IMR-90 (cell line): ENCODE measurements at regions of chr2 and their contacts with region 1.

Region 1: GRCh38 chr2:231900486-231900942 is 25.7 kb downstream of the NPPC start:
- DNase-seq: peak; percentile 55
- ATAC-seq: peak; percentile 100
- H3K4me3 ChIP-seq: no peak overlapping the region
- H3K27ac ChIP-seq: no peak overlapping the region
- H3K4me1 ChIP-seq: no peaks in the 10 kb centered on the region
- H3K27me3 ChIP-seq: peaks cover 16% of the 10 kb centered on the region; the same call in 1 of the 2 replicates
- CTCF ChIP-seq: peak; percentile 79
- POLR2A ChIP-seq: no peak
- RAD21 ChIP-seq: peak; percentile 57

Region 2: GRCh38 chr2:232075080-232075479 is 174.6 kb after region 1 on chr2:
- CTCF ChIA-PET with region 1: no interaction called
- POLR2A ChIA-PET with region 1: no interaction called
- dilution Hi-C with region 1: no loop called
- in situ Hi-C with region 1: no loop called
- intact Hi-C with region 1: no loop called
- DNase-seq: peak; percentile 73
- ATAC-seq: peak; percentile 75
- H3K4me3 ChIP-seq: no peak overlapping the region
- H3K27ac ChIP-seq: no peak overlapping the region
- H3K4me1 ChIP-seq: peaks cover 5% of the 10 kb centered on the region
- H3K27me3 ChIP-seq: no peaks in the 10 kb centered on the region
- CTCF ChIP-seq: no peak
- POLR2A ChIP-seq: no peak
- RAD21 ChIP-seq: no peak

Region 3: DNA sequence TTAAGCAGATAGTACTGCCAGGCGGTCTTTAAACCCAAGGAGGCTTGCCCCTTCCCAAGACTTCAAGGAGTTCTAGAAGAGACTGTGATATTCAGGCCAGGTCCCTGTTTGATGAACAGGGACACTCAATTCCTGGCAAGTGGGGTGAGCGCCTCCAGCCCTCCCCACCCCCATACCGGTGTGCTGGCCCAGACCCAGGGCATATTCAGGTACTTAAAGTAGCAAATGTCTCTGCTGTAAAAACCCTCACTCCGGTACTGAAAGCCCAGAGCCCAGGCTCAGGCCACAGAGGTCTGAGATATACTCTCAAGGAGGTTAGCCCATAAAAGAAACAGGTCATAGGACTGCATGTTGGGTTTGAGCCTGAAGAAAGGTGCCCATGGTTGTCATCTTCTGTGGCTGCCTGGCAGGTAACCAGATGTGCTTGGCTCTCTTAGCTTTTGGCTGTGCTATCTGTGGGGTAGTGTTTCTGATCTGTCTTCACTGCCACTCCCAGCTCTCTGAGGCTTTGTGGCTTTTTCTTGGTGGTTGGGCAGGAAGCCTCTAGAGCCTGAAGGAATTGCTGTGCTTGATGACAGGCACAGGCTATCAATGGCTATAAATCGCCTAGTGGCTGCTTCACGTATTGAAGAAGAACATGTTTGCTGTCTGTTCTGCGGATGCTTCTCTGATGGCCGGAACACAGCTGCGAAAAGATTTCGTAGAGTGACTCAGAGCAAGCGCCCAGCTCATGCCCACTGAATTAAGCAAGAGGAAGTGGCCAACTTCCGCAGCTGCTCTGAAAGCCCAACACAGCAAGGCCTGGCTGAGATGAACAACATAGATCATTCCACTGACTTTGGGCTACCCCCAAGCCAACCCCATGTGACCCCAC is 414.8 kb after region 1 on chr2:
- CTCF ChIA-PET with region 1: no interaction called
- POLR2A ChIA-PET with region 1: no interaction called
- dilution Hi-C with region 1: no loop called
- in situ Hi-C with region 1: loop called (anchors 5 kb)
- intact Hi-C with region 1: no loop called
- DNase-seq: peak; percentile 30
- ATAC-seq: no peak
- H3K4me3 ChIP-seq: no peak overlapping the region
- H3K27ac ChIP-seq: no peak overlapping the region
- H3K4me1 ChIP-seq: no peaks in the 10 kb centered on the region
- H3K27me3 ChIP-seq: no peaks in the 10 kb centered on the region
- CTCF ChIP-seq: no peak
- POLR2A ChIP-seq: no peak
- RAD21 ChIP-seq: no peak

Region 4: GRCh38 chr2:232432598-232433184 is 532.2 kb after region 1 on chr2:
- CTCF ChIA-PET with region 1: interaction called, 3 read pairs
- POLR2A ChIA-PET with region 1: no interaction called
- dilution Hi-C with region 1: no loop called
- in situ Hi-C with region 1: loop called (anchors 5 kb)
- intact Hi-C with region 1: no loop called
- DNase-seq: no peak
- ATAC-seq: no peak
- H3K4me3 ChIP-seq: no peak overlapping the region
- H3K27ac ChIP-seq: no peak overlapping the region
- H3K4me1 ChIP-seq: no peaks in the 10 kb centered on the region
- H3K27me3 ChIP-seq: peaks cover 23% of the 10 kb centered on the region
- CTCF ChIP-seq: 0 out of 2 replicates have a peak, but pooled peaks have one; percentile 14
- POLR2A ChIP-seq: no peak
- RAD21 ChIP-seq: no peak

Region 5: DNA sequence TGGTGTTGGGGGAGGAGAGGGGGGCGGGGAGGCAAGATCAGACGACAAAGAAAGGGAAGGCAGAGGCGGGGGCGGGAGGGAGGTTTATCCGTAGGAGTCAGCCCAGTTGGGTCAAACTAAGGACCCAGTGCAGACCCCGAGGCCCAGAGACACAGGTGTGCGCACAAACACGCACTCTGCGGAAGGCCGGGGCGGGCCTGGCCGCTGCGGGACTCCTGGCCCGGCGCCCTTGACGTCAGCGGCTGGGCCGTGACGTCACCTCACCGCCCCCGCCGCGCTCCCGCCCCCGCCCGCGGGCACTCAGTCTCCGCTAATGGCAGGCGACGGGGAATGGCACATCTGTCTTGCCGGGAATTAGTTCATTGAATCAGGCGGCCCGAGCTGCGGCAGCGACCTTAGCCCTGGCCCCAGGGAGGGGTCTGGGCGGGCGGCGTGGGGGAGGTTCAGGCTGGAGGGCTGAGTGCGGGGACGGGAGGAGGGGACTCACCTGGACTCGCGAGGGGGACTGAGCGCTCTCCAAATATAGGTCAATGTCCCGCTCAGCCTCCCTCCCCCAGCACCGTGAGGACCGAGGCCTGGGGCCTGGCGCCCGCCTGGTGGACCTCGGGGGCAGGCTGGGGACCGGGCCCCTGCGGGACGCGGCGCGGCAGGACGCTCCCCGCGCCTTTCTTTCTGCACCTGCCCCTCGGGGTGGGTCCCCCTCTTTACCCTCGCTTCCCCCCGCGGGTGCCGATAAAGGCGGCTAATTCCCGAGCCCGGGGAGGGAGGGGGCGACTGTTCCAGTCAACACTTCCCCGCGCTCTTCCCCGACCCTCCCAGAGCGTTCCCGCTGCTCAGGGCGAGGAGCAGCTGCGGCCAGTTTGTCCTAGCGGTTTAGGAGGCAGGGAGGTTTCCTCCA is 602.6 kb after region 1 on chr2:
- CTCF ChIA-PET with region 1: no interaction called
- POLR2A ChIA-PET with region 1: no interaction called
- dilution Hi-C with region 1: no loop called
- in situ Hi-C with region 1: no loop called
- intact Hi-C with region 1: loop called (anchors 10 kb)
- DNase-seq: peak; percentile 45
- ATAC-seq: peak; percentile 41
- H3K4me3 ChIP-seq: no peak overlapping the region; the same call in 1 of the 2 replicates
- H3K27ac ChIP-seq: no peak overlapping the region
- H3K4me1 ChIP-seq: no peaks in the 10 kb centered on the region
- H3K27me3 ChIP-seq: peaks cover 73% of the 10 kb centered on the region
- CTCF ChIP-seq: no peak
- POLR2A ChIP-seq: no peak
- RAD21 ChIP-seq: no peak